HepG2 (cell line): ENCODE measurements at regions of chr12 and their contacts with region 1.

Region 1: GRCh38 chr12:4068981-4069669 is 195.9 kb upstream of the PARP11 start:
- DNase-seq: no peak
- ATAC-seq: no peak
- H3K4me3 ChIP-seq: no peak overlapping the region
- H3K27ac ChIP-seq: no peak overlapping the region
- H3K4me1 ChIP-seq: no peaks in the 10 kb centered on the region
- H3K27me3 ChIP-seq: no peaks in the 10 kb centered on the region
- CTCF ChIP-seq: no peak
- EP300 ChIP-seq: no peak
- POLR2A ChIP-seq: no peak
- RAD21 ChIP-seq: no peak

Region 2: GRCh38 chr12:4107436-4107878 is 38.3 kb after region 1 on chr12:
- CTCF ChIA-PET with region 1: no interaction called
- POLR2A ChIA-PET with region 1: no interaction called
- in situ Hi-C with region 1: no loop called
- intact Hi-C with region 1: loop called (anchors 2 kb)
- DNase-seq: peak; percentile 55
- ATAC-seq: peak; percentile 86
- H3K4me3 ChIP-seq: no peak overlapping the region
- H3K27ac ChIP-seq: no peak overlapping the region
- H3K4me1 ChIP-seq: no peaks in the 10 kb centered on the region
- H3K27me3 ChIP-seq: no peaks in the 10 kb centered on the region
- CTCF ChIP-seq: peak; percentile 68
- EP300 ChIP-seq: no peak
- POLR2A ChIP-seq: no peak
- RAD21 ChIP-seq: no peak

Region 3: GRCh38 chr12:4223249-4223845 is 154.2 kb after region 1 on chr12:
- CTCF ChIA-PET with region 1: no interaction called
- POLR2A ChIA-PET with region 1: no interaction called
- in situ Hi-C with region 1: no loop called
- intact Hi-C with region 1: no loop called
- DNase-seq: no peak
- ATAC-seq: no peak
- H3K4me3 ChIP-seq: no peak overlapping the region
- H3K27ac ChIP-seq: no peak overlapping the region
- H3K4me1 ChIP-seq: no peaks in the 10 kb centered on the region
- H3K27me3 ChIP-seq: peaks cover 0 to 41% of the 10 kb centered on the region in 2 experiments; a peak in 2 of 5 replicates
- CTCF ChIP-seq: no peak
- EP300 ChIP-seq: no peak
- POLR2A ChIP-seq: no peak
- RAD21 ChIP-seq: no peak